GM10248 (cell line): ENCODE measurements at regions of chr4 and their contacts with region 1.

Region 1: DNA sequence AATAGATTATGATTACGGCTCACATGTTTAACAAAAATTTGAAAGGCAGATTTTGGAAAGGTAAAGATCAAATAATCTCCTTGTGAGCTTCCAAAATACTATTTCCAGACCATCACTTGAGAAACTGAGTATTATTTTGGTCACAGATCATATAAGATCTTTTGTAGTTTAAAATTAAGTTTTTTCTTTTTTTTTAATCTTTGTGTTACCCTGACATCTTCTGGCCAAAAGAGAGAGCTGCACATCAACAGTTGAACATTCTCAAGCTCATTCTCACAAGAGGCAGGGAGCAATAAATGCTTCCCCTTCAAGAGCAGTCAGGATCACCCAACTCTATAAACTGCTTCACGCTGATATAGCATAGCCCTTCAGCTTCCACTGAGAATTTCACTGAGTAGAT is 15.9 kb downstream of the TMEM192 start:
- DNase-seq: peak; percentile 40
- CTCF ChIP-seq: peak; percentile 47

Region 2: GRCh38 chr4:164768516-164768915 is 328.3 kb before region 1 on chr4:
- CTCF ChIA-PET with region 1: interaction called, 23 read pairs
- POLR2A ChIA-PET with region 1: no interaction called
- DNase-seq: peak; percentile 13
- CTCF ChIP-seq: peak; percentile 19

Region 3: DNA sequence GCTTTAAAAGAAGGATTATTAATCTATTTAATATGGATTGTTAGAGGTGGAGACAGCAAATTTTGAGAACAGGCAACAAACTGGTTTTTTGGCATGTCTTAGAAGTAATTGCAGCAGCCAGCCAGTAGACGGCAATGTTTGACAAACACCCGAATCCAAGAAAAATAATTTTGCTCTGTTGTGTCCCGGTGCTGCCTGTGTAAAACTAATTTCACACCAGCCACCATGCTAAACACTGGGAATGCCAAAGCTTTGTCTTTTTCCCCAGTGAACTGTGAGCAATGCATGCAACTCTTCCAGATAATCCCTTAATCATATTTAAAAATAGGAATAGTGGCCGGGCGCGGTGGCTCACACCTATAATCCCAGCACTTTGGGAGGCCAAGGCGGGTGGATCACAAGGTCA is 317.0 kb before region 1 on chr4:
- CTCF ChIA-PET with region 1: interaction called, 10 read pairs
- POLR2A ChIA-PET with region 1: no interaction called
- DNase-seq: peak; percentile 51
- CTCF ChIP-seq: peak; percentile 95

Region 4: DNA sequence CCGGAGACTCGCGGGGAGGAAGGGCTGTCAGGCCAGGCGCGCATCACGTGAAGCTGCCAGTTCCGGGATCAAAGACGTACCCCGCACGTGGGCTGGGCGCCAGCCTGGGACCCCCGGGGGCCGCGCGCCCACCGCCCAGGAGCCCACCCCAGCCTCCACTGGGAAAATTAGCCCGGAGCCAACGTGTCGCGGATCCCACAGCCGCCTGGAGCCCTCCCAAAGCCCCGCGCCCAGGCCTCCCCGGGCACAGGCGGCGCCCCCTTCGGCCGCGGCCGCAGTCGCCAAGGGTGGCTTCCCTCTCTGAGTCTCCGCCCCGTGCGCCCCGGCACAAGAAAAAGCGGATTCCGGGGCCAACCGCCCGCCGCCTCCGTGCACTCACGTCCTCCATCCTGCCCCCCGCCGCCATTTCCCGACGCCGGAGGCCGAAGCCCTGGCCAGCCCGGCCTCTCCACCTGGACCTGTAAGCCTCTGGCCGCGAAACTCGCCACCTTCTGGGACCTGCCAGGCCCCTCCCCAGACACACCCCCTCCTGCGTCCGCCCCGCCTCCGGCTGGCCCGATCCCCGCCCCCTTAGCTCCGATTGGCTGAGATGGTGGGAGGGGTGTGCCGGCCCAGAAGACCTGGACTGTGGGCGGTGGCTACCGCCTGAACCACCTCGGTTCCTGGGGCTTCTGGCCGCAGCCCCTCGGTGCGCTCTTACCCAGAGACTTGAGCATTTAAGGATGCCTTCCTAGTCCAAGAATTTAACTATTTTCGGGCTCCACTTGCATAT is 15.8 kb after region 1 on chr4 and contains the start of gene TMEM192:
- CTCF ChIA-PET with region 1: interaction called, 10 read pairs
- POLR2A ChIA-PET with region 1: no interaction called
- DNase-seq: peak; percentile 97
- CTCF ChIP-seq: peak; percentile 33